Right ventricle myocardium inferior (tissue), 1 donor: ENCODE measurements at regions of chr4 and their contacts with region 1.

Region 1: DNA sequence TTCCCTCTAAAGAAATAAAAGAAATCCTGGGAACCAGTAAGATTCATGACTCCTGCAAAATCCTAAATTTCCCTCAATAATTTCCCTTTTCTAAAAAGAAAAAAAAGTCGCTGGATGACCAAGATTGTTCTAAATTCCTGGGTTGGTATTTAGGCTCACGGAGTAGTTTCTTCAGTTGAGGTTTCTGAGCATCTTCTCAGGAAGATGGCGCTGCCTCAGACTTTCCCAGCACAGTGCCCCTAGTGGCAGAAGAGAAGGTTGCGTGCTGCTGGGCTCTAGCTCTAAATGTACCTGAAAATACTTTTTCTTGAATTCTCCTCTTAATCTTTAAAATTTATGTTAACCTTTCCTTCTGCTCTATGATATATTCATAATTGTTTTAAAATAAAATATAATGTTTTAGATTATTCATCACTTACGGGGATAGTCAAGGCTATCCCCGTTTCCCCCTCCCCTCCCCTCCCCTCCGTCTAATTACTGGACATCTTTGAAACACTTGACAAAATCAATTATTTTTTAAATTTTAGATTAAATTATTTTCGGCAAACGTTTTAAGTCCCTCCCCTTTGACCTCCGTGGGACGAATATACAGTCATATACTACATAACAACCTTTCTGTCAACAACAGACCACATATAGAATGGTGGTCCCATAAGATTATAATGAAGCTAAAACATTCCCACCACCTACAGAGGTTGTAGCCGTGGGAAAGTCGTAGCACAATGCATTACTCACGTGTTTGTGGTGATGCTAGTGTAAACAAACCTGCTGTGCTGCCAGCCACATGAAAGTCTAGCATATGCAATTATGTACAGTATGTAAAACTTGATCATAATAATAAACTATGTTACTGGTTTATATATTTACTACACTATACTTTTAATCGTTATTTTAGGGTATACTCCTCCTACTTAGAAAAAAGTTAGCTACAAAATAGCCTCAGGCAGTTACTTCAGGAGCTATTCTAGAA is 41.0 kb upstream of the GATB start:
- DNase-seq: no peak
- ATAC-seq: no peak

Region 2: GRCh38 chr4:151688003-151688784 is 113.6 kb before region 1 on chr4:
- intact Hi-C with region 1: loop called (anchors 2 kb)
- DNase-seq: peak; percentile 42
- ATAC-seq: peak; percentile 36

Region 3: DNA sequence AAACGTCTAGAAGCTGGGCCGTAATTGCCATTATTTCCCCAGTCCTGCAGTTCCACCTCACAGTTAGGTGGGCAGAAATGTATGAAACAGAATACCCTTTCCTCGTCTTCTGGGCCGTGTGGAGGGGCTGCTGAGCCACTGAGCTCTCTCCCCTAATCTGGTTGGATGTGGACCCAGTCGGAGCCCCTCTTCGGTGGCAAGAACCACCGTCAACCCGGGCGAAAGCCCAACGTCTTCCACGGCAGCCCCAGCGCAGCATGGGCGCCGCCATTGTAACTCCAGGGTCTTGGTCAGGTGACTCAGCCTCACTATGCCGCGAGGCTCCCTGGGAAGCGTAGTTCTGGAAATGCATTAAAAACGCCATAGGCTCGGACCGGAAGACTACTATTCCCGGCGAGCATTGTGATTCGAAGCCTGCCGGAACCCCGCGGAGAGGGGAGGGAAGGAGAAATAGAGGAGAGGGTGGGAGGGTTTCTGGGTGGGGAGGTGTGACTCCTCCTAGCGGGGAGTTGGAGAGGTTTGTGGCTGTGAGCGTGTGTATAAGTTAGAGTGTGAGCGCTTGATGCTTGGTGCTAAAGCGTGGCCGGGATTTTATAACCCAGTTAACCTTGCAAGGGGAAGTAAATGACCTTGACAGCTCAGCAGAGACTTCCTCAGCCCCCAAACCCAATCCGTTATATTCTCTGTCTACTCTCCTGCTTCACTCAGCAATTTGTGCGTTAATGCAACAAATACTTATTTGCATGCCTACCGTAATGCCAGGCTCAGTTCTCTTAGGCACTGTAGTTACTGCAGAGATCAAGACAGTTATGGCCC is 40.9 kb before region 1 on chr4 and contains the start of gene GATB:
- intact Hi-C with region 1: loop called (anchors 2 kb)
- DNase-seq: peak; percentile 95
- ATAC-seq: peak; percentile 99
- total RNA-seq, gene GATB: 171 TPM

Region 4: GRCh38 chr4:152039023-152039481 is 237.2 kb after region 1 on chr4:
- intact Hi-C with region 1: loop called (anchors 2 kb)
- DNase-seq: no peak
- ATAC-seq: peak; percentile 35

Region 5: GRCh38 chr4:152385551-152385950 is 583.7 kb after region 1 on chr4:
- intact Hi-C with region 1: loop called (anchors 5 kb)
- DNase-seq: no peak
- ATAC-seq: no peak